Activated T-helper 2 cell treated with anti-CD3 and anti-CD28 coated beads, Interferon-gamma antibody, Interleukin-2, Interleukin-4, amounts not matched to agents 10 μg/mL and 5 μg/mL and 100 μg/mL, durations not matched to agents 14 hours and 24 hours and 36 hours (primary cell): ENCODE measurements at regions of chr10 and their contacts with region 1.

Region 1: DNA sequence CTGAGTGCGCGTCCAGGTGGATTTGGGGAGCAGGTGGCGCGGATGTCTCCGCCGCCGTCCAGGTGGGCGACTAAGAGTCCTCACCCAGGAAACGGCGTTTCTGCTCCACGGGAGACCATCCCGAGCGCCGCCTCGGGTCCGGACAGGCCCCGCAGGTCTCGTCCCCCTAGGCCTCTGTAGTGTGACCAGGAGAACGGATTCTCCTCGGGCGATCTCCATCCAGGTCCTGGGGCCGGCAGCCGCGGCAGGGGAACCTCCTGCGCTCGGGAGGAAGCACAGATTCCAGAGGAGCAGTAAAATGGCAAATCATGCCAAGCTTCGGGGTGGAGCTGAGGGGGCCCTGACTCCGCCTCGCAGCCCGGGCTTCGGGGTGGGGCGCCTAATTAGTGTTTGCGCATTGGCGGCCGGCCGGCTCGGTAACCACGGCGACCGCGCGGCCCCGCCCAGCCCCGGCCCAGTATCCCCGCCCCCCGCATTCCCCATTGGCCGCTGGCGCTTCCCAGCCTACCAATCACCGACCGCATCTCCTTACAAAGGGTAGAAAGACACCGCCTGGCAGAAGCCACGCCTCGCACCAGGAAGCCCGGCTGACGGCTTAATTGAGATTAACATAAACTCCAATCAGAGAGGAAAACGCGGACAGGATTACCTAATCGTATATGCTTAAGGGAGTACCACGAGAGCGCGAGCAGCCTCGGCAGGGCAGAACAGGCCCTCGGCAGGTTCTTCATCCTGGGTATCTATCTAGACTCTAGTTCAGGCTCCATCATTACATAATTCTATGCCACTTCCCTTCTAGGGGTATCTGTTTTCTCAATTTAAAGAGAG is 168.6 kb downstream of the ARHGAP12 start:
- DNase-seq: peak; percentile 90
- H3K4me3 Mint-ChIP-seq: peak overlapping the region; percentile 82
- H3K27ac Mint-ChIP-seq: peak overlapping the region; percentile 78
- H3K4me1 Mint-ChIP-seq: peaks cover 13% of the 10 kb centered on the region
- H3K27me3 Mint-ChIP-seq: no peaks in the 10 kb centered on the region

Region 2: GRCh38 chr10:31031558-31032257 is 728.3 kb before region 1 on chr10 and contains the start of gene ZNF438:
- intact Hi-C with region 1: loop called (anchors 1 kb)
- DNase-seq: peak; percentile 94
- H3K4me3 Mint-ChIP-seq: peak within 1 kb of the TSS; percentile 86
- H3K27ac Mint-ChIP-seq: peak within 1 kb of the TSS; percentile 98
- H3K4me1 Mint-ChIP-seq: peaks cover 27% of the 10 kb centered on the region
- H3K27me3 Mint-ChIP-seq: no peaks in the 10 kb centered on the region
- total RNA-seq, gene ZNF438: 5.8 and 6.1 TPM in 2 replicates

Region 3: GRCh38 chr10:31340343-31340742 is 419.7 kb before region 1 on chr10:
- intact Hi-C with region 1: loop called (anchors 10 kb)
- DNase-seq: no peak
- H3K4me3 Mint-ChIP-seq: no peak overlapping the region
- H3K27ac Mint-ChIP-seq: no peak overlapping the region
- H3K4me1 Mint-ChIP-seq: peaks cover 23% of the 10 kb centered on the region
- H3K27me3 Mint-ChIP-seq: no peaks in the 10 kb centered on the region

Region 4: GRCh38 chr10:31603235-31604087 is 156.6 kb before region 1 on chr10:
- intact Hi-C with region 1: loop called (anchors 2 kb)
- DNase-seq: peak; percentile 79
- H3K4me3 Mint-ChIP-seq: peak overlapping the region; percentile 87
- H3K27ac Mint-ChIP-seq: peak overlapping the region; percentile 60
- H3K4me1 Mint-ChIP-seq: peaks cover 21% of the 10 kb centered on the region
- H3K27me3 Mint-ChIP-seq: peaks cover 4% of the 10 kb centered on the region

Region 5: DNA sequence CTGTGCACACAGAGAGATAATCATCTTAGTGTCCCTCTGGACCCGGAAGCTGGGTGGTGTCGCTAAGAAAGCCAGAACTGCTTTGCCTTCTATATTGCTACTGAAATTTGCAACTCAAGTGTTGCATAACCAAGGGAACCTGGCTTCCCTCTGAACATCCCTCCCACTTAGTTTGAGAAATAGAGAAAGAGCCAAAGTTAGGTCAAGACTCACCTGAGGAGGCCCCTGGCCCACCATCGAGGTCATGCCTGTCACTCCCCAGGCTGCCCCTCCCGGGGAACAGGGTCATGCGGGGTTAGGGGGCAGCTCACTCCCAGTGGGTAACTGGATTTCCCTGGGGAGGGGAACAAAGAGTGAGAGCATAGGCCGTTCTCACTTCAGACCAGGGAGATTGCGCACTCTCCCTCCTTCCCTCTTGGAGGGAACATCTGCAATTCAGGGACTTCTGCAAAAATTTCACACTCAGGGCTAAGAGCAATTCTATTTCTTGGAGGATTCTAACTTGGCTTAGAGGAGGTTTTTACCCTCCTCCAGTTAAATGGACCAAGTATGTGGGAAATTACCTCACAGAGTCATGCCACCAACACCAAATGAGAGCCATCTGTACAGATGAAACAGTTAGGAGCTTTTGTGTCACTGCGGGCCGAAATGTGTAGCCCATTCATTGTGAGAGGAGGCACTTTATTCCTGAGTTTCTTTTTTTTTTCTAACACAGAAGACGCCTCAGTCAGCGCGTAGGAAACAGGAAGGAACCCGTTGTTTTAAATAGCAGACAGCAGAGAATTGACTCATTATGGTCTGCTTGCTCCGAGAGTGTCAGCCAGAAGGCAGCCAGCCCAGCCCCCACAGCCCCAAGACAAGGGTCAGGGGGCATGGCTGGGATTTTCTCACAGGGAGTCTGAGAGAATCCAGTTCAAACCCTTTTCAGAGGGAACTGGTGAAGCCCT is 52.6 kb before region 1 on chr10:
- intact Hi-C with region 1: loop called (anchors 1 kb)
- DNase-seq: peak; percentile 38
- H3K4me3 Mint-ChIP-seq: peak overlapping the region; percentile 33
- H3K27ac Mint-ChIP-seq: peak overlapping the region; percentile 88
- H3K4me1 Mint-ChIP-seq: peaks cover 26% of the 10 kb centered on the region
- H3K27me3 Mint-ChIP-seq: no peaks in the 10 kb centered on the region

Region 6: GRCh38 chr10:31745612-31746376 is 14.2 kb before region 1 on chr10:
- intact Hi-C with region 1: loop called (anchors 1 kb)
- DNase-seq: peak; percentile 27
- H3K4me3 Mint-ChIP-seq: no peak overlapping the region
- H3K27ac Mint-ChIP-seq: peak overlapping the region; percentile 67
- H3K4me1 Mint-ChIP-seq: peaks cover 23% of the 10 kb centered on the region
- H3K27me3 Mint-ChIP-seq: no peaks in the 10 kb centered on the region

Region 7: DNA sequence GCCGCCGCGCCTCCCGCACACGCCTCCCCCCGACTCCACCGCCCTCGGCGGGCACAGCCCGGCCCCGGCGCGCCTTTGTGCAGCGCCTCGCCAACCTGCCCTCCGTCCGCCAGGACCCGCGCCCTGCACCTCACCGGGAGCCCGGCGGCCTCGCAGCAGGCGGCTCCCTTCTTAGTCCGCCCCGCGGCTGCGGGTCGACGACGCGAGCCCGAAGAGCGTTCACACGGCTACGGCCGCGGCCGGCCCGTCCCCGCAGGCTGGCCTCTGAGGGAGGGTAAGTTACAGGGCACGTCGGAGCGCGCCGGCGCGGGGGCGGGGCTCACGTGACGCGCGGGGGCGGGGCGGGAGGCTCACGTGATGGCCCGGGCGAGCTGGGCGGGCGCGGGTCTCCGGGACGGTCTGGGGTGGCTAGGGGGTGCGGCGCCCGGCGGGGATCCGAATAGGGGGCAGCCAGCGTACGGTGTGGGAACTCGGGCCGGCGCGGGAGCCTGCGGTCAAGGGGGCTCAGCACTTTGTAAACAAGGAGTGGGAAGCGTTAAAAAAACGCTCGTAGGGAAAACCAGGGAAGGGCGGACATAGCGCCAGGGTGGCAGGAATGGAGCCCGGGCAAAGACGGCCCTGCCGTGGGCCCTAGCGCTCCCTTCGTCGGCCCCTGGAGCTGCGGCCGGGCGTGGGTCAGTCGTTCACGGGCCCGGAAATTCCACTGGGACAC is 168.7 kb after region 1 on chr10 and contains the start of gene ARHGAP12:
- intact Hi-C with region 1: loop called (anchors 10 kb)
- DNase-seq: peak; percentile 66
- H3K4me3 Mint-ChIP-seq: peak within 1 kb of the TSS; percentile 83
- H3K27ac Mint-ChIP-seq: peak within 1 kb of the TSS; percentile 67
- H3K4me1 Mint-ChIP-seq: peaks cover 39% of the 10 kb centered on the region
- H3K27me3 Mint-ChIP-seq: peaks cover 21% of the 10 kb centered on the region
- total RNA-seq, gene ARHGAP12: 2.7 and 3.5 TPM in 2 replicates